ENCODE measurements at regions of chr12 and their contacts with region 1.

Region 1: DNA sequence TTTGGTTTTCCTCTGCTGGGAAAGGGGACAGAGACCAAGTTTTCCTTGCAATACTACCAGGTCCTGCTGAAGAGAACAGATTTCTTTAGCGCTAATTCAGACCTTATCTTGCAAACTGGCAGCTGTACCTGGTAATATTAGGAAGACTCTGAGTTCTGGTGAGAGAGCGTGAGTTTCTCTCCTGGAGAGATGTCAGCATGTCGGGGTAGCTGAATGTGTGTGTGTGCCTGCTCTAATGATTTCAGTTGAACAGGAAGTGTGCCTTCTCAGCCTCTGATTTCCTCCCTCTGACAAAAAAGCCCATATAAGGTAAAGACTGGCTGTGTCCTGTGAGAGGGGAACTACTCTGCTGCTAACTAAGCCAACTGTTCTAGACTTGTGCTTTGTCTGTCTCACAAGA is 10.3 kb upstream of the ERP27 start:
- DNase-seq: peak in 2 of 5 donors; percentile 41 to 51
- H3K4me3 ChIP-seq: no peak overlapping the region
- H3K27ac ChIP-seq: peak overlapping the region; percentile 17 to 65
- H3K4me1 ChIP-seq: peaks cover 9% of the 10 kb centered on the region
- H3K27me3 ChIP-seq: no peaks in the 10 kb centered on the region
- CTCF ChIP-seq: no peak
- EP300 ChIP-seq: peak; percentile 28
- POLR2A ChIP-seq: peak; percentile 7

Region 2: DNA sequence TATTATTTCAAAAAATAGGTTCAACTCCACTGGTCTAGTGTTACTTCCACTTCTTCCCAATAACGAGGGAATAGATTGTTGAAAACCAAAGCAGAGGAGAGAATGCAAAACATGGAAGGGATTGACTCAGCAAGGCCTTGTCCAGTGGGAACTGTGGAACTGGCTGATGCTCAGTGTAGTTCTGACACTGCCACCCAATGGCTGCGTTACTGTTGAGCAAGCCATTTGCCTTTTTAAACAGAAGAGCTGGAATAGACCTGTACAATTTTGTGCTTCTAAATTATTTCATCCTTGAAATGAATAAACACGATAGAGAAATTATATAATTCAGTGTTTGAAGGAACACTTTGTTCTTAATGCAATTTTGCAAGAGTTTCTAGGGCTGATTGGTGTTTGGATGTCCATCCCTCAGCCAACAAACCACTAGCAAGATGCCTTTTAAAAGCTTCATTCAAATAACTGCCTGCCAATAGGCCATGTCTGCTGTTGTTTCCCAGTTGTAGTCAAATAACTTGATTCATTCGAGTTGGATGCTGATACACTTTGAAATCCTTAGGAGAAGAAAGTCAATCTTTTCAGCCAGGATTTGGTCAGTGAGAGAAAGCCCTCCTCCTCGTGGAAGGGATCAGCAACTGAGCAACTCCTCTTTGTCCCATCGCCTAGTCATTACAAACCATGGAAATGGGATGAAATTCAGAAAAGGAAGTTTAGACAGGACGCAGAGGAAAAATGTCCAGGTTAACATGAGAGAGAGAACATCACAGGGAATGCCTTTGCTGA is 55.8 kb before region 1 on chr12:
- intact Hi-C with region 1: loop called in 2 of 4 experiments (anchors 10 kb)
- DNase-seq: peak; percentile 56 to 85 (median 74)
- H3K4me3 ChIP-seq: no peak overlapping the region
- H3K27ac ChIP-seq: peak overlapping the region; percentile 31 to 74
- H3K4me1 ChIP-seq: peaks cover 9% of the 10 kb centered on the region
- H3K27me3 ChIP-seq: no peaks in the 10 kb centered on the region
- CTCF ChIP-seq: peak in 2 of 3 donors; percentile 29 to 34
- EP300 ChIP-seq: no peak
- POLR2A ChIP-seq: no peak